ENCODE measurements at regions of chr17 and their contacts with region 1.

Region 1: GRCh38 chr17:29369831-29370735 is 20.1 kb upstream of the TAOK1 start:
- DNase-seq: peak; percentile 70
- H3K4me3 ChIP-seq: peak overlapping the region; percentile 23 to 60; a peak in 3 of 4 replicates
- H3K27ac ChIP-seq: peak overlapping the region; percentile 4 to 47; a peak in 2 of 4 replicates
- H3K4me1 ChIP-seq: peaks cover 0 to 10% of the 10 kb centered on the region in 2 experiments; a peak in 2 of 4 replicates
- H3K27me3 ChIP-seq: no peaks in the 10 kb centered on the region
- CTCF ChIP-seq: peak; percentile 77
- EP300 ChIP-seq: no peak
- RAD21 ChIP-seq: peak; percentile 82

Region 2: GRCh38 chr17:29341751-29342150 is 28.3 kb before region 1 on chr17:
- CTCF ChIA-PET with region 1: interaction called, 17 read pairs
- POLR2A ChIA-PET with region 1: no interaction called
- DNase-seq: no peak
- H3K4me3 ChIP-seq: no peak overlapping the region
- H3K27ac ChIP-seq: no peak overlapping the region
- H3K4me1 ChIP-seq: no peaks in the 10 kb centered on the region
- H3K27me3 ChIP-seq: peaks cover 10% of the 10 kb centered on the region; the same call in 1 of the 2 replicates
- CTCF ChIP-seq: no peak
- EP300 ChIP-seq: no peak
- RAD21 ChIP-seq: no peak

Region 3: DNA sequence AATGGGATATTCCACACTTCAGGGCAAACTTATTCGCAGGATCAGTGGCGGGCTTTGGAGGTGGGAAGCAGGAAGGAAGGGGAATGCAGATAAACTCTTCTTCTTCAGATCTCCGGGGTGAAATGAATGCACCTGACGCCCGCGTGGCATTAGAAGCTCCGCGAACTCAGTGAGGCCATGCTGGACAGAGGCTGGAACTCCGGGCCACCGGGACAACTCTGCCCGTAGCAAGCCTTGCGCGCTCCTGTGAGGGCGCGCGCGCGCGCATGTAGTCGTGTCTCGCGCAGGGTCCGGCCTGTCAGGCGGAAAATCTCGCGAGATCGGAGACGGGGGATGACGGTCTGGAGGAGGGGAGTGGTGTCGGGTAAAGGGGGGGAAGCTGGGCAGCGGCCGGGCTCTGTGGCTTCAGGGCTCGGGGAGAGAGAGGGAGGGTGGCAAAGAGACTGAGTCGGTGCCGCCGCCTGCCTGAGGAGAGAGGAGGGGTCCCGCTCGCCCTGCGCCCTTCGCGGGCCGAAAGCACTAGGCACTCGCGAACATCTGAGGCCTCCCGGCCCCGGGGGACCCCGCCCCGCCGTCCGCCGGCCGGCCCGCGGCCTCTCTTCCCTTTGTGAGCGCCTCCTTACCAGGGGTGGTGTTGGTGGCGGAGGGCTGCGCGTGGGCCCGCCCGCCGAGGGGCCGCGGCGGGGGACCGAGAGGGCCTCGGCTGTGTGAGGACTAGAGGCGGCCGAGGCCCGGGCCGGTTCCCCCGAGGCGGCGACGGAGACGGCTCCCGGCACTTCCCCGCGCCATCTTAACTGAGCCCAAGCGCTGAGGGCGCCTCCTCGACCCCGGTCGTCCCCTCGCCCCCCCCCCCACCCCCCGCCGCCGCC is 20.1 kb after region 1 on chr17 and contains the start of gene TAOK1:
- CTCF ChIA-PET with region 1: interaction called, 15 read pairs
- POLR2A ChIA-PET with region 1: interaction called, 6 read pairs
- DNase-seq: peak; percentile 99
- H3K4me3 ChIP-seq: peak within 1 kb of the TSS; percentile 82 to 91
- H3K27ac ChIP-seq: peak within 1 kb of the TSS; percentile 89 to 95
- H3K4me1 ChIP-seq: peaks cover 10% of the 10 kb centered on the region in 2 experiments; a peak in 3 of 4 replicates
- H3K27me3 ChIP-seq: no peaks in the 10 kb centered on the region
- CTCF ChIP-seq: no peak
- EP300 ChIP-seq: no peak
- RAD21 ChIP-seq: no peak
- polyA plus RNA-seq, gene TAOK1: 5.9 and 7.4 TPM in 2 replicates

Region 4: GRCh38 chr17:29524460-29525091 is 154.5 kb after region 1 on chr17:
- CTCF ChIA-PET with region 1: interaction called, 16 read pairs
- POLR2A ChIA-PET with region 1: no interaction called
- DNase-seq: no peak
- H3K4me3 ChIP-seq: no peak overlapping the region
- H3K27ac ChIP-seq: no peak overlapping the region
- H3K4me1 ChIP-seq: no peaks in the 10 kb centered on the region
- H3K27me3 ChIP-seq: no peaks in the 10 kb centered on the region
- CTCF ChIP-seq: no peak
- EP300 ChIP-seq: no peak
- RAD21 ChIP-seq: no peak

Region 5: DNA sequence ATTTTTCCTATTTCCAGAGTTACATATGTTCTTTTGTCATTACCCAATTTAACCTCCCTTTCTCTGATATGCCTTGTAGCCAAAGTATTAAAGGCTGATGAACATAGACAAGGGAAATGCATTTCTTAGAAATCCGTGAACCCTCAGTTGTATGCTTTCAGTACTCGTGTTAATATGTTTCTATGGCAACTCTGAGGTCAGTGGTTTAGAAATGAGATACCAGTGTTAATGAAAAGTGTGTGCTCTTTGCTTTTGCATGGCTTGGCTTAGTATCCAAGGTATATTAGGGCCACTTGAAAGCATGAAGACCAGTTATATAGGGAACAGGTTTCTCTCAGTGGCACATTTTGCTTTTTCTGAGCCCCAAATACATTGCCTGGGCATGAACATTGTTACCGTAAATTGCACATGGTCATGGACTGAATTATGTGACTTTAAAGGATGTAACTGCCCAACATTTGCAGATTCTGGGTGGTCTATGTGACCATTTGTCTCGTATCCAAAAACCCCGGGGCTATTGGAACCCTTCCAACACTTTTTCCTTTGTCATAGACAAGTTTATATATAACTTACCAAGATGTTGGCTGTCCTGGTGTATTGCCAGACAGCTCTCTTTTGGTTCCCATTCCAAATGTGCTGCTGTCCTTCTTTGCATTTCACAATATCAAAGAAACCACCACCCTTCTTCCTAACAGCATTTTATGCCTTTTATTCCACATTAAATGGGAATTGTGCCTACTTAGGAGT is 179.3 kb after region 1 on chr17:
- CTCF ChIA-PET with region 1: interaction called, 22 read pairs
- POLR2A ChIA-PET with region 1: no interaction called
- DNase-seq: peak; percentile 25
- H3K4me3 ChIP-seq: no peak overlapping the region
- H3K27ac ChIP-seq: peak overlapping the region in 1 of 2 experiments; percentile 47; a peak in 1 of 4 replicates
- H3K4me1 ChIP-seq: peaks cover 4 to 7% of the 10 kb centered on the region in 2 experiments; a peak in 3 of 4 replicates
- H3K27me3 ChIP-seq: no peaks in the 10 kb centered on the region
- CTCF ChIP-seq: no peak
- EP300 ChIP-seq: no peak
- RAD21 ChIP-seq: no peak

Region 6: DNA sequence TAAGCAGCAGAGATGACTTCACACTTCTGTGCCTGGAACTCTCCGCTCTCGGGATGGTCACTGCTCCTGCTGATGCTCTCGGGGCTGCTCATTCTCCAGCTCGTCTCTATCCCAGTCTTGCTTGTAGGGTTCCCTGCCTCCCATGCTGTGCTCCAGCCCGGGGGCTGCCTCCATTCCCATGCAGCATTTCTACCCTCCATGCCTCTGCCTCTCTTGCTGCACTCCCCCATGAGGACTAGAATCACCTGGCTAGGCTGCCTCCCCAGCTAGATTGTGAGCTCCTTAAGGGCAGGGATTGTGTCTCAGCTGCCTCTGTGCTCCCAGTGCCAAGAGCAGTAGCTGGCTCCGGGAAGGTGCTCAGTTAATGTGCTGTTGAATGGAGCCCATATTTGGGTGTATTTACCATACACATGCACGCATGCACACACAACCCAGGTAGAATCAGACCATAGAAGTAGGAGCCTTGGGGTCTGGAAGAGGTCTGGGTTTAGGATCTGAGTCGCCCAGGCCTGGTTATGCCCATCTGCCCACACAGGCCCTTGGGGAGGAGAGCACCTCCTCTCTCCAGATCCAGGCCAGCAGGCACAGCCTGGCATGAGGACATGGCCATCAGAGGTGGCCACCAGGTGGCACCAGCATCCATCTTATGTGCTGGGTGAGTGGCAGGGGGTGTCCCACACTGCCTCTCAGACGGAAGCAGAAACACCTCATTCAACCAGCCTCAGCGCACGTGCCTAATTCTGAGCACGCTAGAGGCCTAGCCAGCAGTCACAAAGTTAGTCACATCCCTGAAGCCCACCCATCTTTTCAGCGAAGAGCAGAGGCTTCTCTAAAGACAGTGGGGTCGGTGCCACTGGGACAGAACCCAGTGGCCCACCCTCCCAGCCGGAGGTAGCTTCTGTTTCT is 210.0 kb after region 1 on chr17:
- CTCF ChIA-PET with region 1: interaction called, 144 read pairs
- POLR2A ChIA-PET with region 1: no interaction called
- DNase-seq: peak; percentile 96
- H3K4me3 ChIP-seq: peak overlapping the region in 1 of 2 experiments; percentile 32; a peak in 1 of 4 replicates
- H3K27ac ChIP-seq: peak overlapping the region in 1 of 2 experiments; percentile 53; a peak in 2 of 4 replicates
- H3K4me1 ChIP-seq: peaks cover 2 to 17% of the 10 kb centered on the region in 2 experiments; a peak in 2 of 4 replicates
- H3K27me3 ChIP-seq: no peaks in the 10 kb centered on the region
- CTCF ChIP-seq: peak; percentile 85
- EP300 ChIP-seq: no peak
- RAD21 ChIP-seq: peak; percentile 92

Measured in SK-N-SH (cell line).